ENCODE measurements at regions of chr7 and their contacts with region 1.

Region 1: DNA sequence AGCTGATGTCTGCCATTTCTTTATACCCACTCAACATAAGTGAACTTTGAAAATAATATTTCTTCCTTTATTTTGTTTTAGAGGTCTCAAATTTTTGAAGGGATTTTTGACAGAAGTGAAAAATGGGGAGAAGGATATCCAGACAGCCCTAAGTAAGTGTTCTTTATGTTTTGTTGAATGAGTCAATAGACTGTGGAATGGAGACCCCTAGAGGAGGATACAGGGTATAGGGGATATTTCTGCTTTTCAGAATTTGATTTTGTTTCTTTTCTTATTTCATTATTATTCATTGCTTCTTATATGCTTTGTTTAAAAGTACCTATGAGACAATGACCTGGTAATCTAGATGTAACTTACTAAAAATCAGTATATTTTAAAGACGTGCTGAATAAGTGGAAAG is 34.4 kb downstream of the PLEKHA8 start:
- DNase-seq: no peak
- H3K4me3 ChIP-seq: no peak overlapping the region
- H3K27ac ChIP-seq: no peak overlapping the region
- H3K27me3 ChIP-seq: no peaks in the 10 kb centered on the region
- CTCF ChIP-seq: peak; percentile 79

Region 2: GRCh38 chr7:29748286-29749108 is 314.1 kb before region 1 on chr7:
- CTCF ChIA-PET with region 1: interaction called, 13 read pairs
- POLR2A ChIA-PET with region 1: no interaction called
- DNase-seq: peak; percentile 4
- H3K4me3 ChIP-seq: no peak overlapping the region
- H3K27ac ChIP-seq: no peak overlapping the region
- H3K27me3 ChIP-seq: peaks cover 4% of the 10 kb centered on the region
- CTCF ChIP-seq: peak; percentile 65

Region 3: DNA sequence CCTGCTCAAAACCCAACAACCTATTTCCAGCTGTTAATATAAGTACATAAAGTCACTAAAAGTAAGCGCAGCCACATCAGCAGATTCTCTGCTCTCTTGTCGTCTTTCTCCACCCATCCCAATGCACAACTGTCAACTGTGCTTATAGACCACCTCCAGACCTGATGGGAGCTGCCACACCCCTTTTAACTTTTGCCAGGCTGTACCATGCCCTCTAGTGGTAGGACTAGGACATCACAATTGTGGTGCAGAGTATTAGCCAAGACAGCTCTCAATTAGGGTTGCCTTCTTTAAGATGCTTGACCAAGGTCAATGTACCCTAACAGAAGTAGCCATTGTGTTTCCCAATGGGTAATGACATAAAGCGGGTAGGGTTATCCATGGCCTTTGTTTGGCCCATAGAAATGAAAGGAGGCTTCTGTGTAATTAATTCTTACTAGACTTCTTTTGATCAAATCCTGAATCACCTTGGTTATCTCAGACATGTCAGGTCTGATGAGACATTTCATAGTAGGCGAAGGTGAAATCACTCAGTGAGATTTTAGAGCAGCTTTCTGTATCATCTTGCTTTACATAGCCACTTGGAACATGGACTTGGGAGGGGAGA is 141.1 kb before region 1 on chr7:
- CTCF ChIA-PET with region 1: interaction called, 40 read pairs
- POLR2A ChIA-PET with region 1: no interaction called
- DNase-seq: peak; percentile 30
- H3K4me3 ChIP-seq: no peak overlapping the region
- H3K27ac ChIP-seq: no peak overlapping the region
- H3K27me3 ChIP-seq: no peaks in the 10 kb centered on the region
- CTCF ChIP-seq: peak; percentile 94

Region 4: DNA sequence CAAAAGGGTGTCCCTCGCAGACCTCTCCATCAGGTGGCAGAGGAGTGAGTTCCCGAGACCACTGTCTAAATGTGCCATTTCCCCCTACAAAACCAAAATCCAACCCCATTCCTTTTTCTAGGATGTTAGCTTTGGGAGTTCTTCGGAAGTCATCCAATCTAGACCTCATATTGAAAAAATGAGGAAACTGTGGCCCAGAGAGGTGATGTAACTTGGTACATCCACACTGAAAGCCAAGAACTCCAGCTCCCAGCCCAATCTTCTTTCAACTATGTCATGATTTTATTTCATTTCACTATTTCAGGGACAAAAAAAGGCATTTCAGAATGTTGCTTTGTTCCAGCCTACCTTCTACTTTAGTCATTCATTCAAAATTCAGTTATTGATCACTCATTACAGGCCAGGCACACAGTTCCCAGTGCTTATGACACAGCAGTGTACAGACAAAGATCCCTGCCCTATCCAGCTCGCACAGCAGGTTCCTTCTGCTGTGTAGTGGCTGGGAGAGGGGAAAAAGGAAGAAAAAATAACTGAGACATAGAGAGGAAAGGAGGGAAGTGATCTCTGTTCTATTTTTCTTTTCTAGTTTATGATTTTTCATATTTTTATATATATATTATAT is 108.8 kb before region 1 on chr7:
- CTCF ChIA-PET with region 1: interaction called, 13 read pairs
- POLR2A ChIA-PET with region 1: no interaction called
- DNase-seq: no peak
- H3K4me3 ChIP-seq: no peak overlapping the region
- H3K27ac ChIP-seq: no peak overlapping the region
- H3K27me3 ChIP-seq: no peaks in the 10 kb centered on the region
- CTCF ChIP-seq: no peak

Region 5: GRCh38 chr7:30028193-30028748 is 34.3 kb before region 1 on chr7 and contains the start of gene PLEKHA8:
- CTCF ChIA-PET with region 1: interaction called, 15 read pairs
- POLR2A ChIA-PET with region 1: no interaction called
- DNase-seq: peak; percentile 61
- H3K4me3 ChIP-seq: peak within 1 kb of the TSS; percentile 78
- H3K27ac ChIP-seq: no peak within 1 kb of the TSS
- H3K27me3 ChIP-seq: no peaks in the 10 kb centered on the region
- CTCF ChIP-seq: no peak
- polyA plus RNA-seq, gene PLEKHA8: 9.3 and 12.6 TPM in 2 replicates

Region 6: DNA sequence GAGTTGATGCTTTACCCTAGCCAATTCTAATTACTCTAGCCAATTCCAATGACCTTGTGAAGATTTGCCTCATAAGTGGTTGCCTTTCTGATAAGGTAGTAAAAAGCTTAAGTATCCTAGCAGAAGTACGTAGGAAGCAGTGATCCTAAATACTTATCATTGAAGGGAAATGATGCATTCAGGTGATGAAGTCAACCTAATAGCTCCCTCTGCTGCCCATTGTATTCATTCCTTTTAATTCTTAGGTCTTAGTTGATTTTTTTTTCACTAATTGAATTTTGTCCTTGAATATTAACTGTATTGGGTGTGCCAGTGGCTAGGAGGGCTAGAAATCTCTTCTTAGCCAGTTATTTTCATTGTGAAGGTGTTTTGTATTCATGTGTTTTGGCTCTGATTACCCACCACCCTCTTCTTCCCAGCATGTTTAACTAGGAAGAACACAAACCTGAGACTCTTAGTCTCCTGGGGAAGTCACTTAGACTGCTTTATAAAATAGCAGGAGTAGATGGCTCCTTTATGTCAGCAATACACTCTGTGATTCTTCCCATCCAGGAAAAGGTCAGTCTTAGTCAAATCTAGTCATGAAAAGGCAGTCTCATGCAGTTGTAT is 11.9 kb after region 1 on chr7:
- CTCF ChIA-PET with region 1: interaction called, 28 read pairs
- POLR2A ChIA-PET with region 1: no interaction called
- DNase-seq: no peak
- H3K4me3 ChIP-seq: no peak overlapping the region
- H3K27ac ChIP-seq: no peak overlapping the region
- H3K27me3 ChIP-seq: no peaks in the 10 kb centered on the region
- CTCF ChIP-seq: peak; percentile 62